PC-9 (cell line): ENCODE measurements at regions of chr11 and their contacts with region 1.

Region 1: DNA sequence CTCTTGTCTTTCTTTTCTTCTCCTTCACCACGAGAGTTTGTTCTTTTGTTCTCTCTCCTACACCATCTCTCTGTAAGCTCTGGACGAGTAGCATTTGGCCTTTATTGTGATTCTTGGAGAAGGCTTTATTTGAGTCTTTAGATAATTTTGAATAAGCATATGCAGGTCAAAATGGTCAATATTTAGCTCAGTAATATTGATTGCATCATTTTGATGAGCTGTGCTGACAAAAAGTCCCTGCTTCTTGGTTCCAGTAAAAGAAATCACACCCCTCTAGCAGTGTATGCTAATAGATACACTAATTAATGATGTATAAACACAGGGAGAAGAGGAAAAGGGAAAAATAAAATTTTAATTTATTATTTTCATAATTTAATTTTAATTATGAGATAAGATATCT is 25.8 kb upstream of the MUC15 start:
- DNase-seq: no peak
- H3K4me3 ChIP-seq: no peak overlapping the region
- H3K27ac ChIP-seq: no peak overlapping the region
- H3K4me1 ChIP-seq: no peaks in the 10 kb centered on the region
- H3K27me3 ChIP-seq: no peaks in the 10 kb centered on the region
- CTCF ChIP-seq: no peak

Region 2: DNA sequence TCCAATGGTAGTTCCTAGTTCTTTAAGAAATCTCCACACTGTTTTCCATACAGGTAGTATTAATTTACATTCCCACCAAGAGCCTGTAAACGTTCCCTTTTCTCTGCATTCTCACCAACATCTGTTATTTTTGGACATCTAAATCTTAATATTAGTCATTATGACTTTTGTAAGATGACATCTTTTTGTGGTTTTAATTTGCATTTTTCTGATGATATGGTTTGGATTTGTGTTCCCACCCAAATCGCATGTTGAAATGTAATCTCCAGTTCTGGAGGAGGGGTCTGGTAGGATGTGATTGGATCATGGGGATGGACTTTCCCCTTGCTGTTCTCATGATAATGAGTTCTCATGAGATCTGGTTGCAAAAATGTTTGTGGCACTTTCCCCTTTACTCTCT is 114.8 kb before region 1 on chr11:
- CTCF ChIA-PET with region 1: no interaction called
- POLR2A ChIA-PET with region 1: no interaction called
- intact Hi-C with region 1: no loop called
- DNase-seq: no peak
- H3K4me3 ChIP-seq: no peak overlapping the region
- H3K27ac ChIP-seq: no peak overlapping the region
- H3K4me1 ChIP-seq: no peaks in the 10 kb centered on the region
- H3K27me3 ChIP-seq: no peaks in the 10 kb centered on the region
- CTCF ChIP-seq: no peak

Region 3: DNA sequence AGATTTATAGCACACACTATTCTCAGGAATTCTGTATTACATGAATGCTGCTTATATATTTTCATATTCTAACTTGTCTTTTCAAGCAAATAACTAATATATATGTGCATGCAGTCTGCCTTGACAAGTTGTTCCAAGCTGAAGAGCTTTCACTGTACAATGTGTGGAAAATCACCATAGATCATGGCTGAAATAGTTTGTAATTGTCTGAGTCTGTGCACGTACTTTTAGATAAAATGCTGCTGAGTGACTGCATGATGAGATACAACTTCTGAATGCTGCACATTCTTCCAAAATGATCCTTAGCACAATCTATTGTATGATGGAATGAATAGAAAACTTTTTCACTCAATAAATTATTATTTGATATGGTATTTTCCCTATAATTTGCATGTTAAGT is 65.0 kb after region 1 on chr11:
- CTCF ChIA-PET with region 1: no interaction called
- POLR2A ChIA-PET with region 1: no interaction called
- intact Hi-C with region 1: loop called (anchors 2 kb)
- DNase-seq: no peak
- H3K4me3 ChIP-seq: no peak overlapping the region
- H3K27ac ChIP-seq: no peak overlapping the region
- H3K4me1 ChIP-seq: no peaks in the 10 kb centered on the region
- H3K27me3 ChIP-seq: no peaks in the 10 kb centered on the region
- CTCF ChIP-seq: no peak

Region 4: DNA sequence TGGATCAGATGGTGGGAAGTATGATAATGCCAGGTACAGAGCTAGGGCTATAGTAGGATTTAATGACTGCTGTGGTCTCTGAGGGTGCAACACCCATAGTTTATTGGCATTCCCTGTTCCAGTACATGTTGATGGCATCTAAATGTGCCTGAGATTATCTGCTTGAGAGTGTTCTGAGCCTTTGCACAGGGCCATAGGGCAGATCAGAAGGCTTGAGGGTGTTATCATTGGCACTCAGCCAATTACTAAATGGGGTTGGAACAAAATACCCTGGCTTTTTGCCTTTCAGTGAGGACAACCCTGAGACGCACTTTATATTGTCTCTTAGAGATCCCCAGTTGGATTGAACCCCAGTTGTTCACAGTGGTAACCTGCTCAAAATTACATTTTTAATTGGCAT is 117.2 kb after region 1 on chr11:
- CTCF ChIA-PET with region 1: no interaction called
- POLR2A ChIA-PET with region 1: no interaction called
- intact Hi-C with region 1: no loop called
- DNase-seq: no peak
- H3K4me3 ChIP-seq: no peak overlapping the region
- H3K27ac ChIP-seq: no peak overlapping the region
- H3K4me1 ChIP-seq: no peaks in the 10 kb centered on the region
- H3K27me3 ChIP-seq: no peaks in the 10 kb centered on the region
- CTCF ChIP-seq: no peak